GM23248 (cell line): ENCODE measurements at regions of chr12 and their contacts with region 1.

Region 1: DNA sequence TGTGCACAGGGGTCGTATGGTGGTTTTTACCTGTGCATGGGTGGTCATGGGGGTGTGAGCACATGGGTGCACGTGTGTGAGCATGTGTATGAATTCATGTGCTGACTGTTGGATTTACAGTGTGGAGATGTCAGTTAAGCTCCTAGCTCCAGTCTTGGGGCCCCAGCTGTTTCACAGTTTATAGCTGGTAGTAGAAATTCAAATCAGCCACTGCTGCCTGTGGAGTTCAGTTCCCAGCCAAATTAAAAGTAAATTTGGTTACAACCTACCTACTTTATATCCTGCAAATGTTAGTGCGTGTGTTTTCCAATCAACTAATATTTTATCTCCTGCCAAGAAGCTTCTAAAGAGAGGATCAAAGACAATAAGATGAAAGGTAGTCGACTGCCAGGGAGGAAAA is 56.0 kb upstream of the HSPB8 start:
- DNase-seq: no peak
- H3K4me3 ChIP-seq: no peak overlapping the region
- H3K27ac ChIP-seq: no peak overlapping the region
- H3K4me1 ChIP-seq: no peaks in the 10 kb centered on the region
- H3K27me3 ChIP-seq: no peaks in the 10 kb centered on the region

Region 2: GRCh38 chr12:119544765-119545625 is 422.2 kb after region 1 on chr12:
- in situ Hi-C with region 1: loop called (anchors 10 kb)
- DNase-seq: peak; percentile 76
- H3K4me3 ChIP-seq: no peak overlapping the region
- H3K27ac ChIP-seq: no peak overlapping the region
- H3K4me1 ChIP-seq: no peaks in the 10 kb centered on the region
- H3K27me3 ChIP-seq: no peaks in the 10 kb centered on the region